ENCODE measurements at regions of chr9 and their contacts with region 1.

Region 1: GRCh38 chr9:75866273-75866871 is 24.1 kb upstream of the PCSK5 start:
- DNase-seq: no peak
- H3K4me3 ChIP-seq: no peak overlapping the region
- H3K27ac ChIP-seq: no peak overlapping the region
- H3K4me1 ChIP-seq: no peaks in the 10 kb centered on the region
- H3K27me3 ChIP-seq: no peaks in the 10 kb centered on the region
- CTCF ChIP-seq: peak in 3 of 4 experiments; percentile 58 to 72 (median 61)
- EP300 ChIP-seq: no peak
- POLR2A ChIP-seq: no peak

Region 2: DNA sequence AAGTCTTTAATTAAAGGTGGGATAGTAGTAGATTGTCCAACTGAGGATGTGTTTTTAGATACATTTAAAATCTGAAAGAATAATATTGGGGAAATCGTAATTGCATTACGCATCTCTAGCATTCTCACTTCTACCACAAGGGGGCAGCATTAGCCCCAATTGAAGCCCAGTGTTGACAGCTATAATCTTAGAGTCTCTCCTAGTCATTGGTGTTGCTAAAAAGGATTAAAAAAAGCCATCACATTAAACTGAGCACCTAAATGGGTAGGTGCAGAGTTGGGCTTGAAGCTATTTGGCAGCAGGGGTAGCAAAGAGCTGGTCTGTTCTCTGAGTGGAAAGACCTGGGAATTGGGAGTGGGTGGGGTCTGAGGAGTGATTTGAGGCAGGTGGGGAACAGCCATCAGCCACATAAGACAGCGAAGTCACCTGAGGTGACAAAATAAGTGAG is 600.8 kb before region 1 on chr9:
- intact Hi-C with region 1: loop called (anchors 10 kb)
- DNase-seq: no peak
- H3K4me3 ChIP-seq: no peak overlapping the region
- H3K27ac ChIP-seq: no peak overlapping the region
- H3K4me1 ChIP-seq: no peaks in the 10 kb centered on the region
- H3K27me3 ChIP-seq: no peaks in the 10 kb centered on the region
- CTCF ChIP-seq: peak in 3 of 4 experiments; percentile 57 to 74 (median 62)
- EP300 ChIP-seq: no peak
- POLR2A ChIP-seq: no peak

Region 3: GRCh38 chr9:75941066-75941465 is 74.7 kb after region 1 on chr9:
- intact Hi-C with region 1: no loop called
- DNase-seq: no peak
- H3K4me3 ChIP-seq: no peak overlapping the region
- H3K27ac ChIP-seq: no peak overlapping the region
- H3K4me1 ChIP-seq: peaks cover 0 to 13% (median 5%) of the 10 kb centered on the region in 4 donors
- H3K27me3 ChIP-seq: no peaks in the 10 kb centered on the region
- CTCF ChIP-seq: no peak
- EP300 ChIP-seq: no peak
- POLR2A ChIP-seq: no peak

Region 4: GRCh38 chr9:76302947-76303940 is 436.9 kb after region 1 on chr9:
- intact Hi-C with region 1: loop called (anchors 5 kb)
- DNase-seq: no peak
- H3K4me3 ChIP-seq: no peak overlapping the region
- H3K27ac ChIP-seq: no peak overlapping the region
- H3K4me1 ChIP-seq: peaks cover 0 to 5% (median 4%) of the 10 kb centered on the region in 4 donors
- H3K27me3 ChIP-seq: peaks cover 0 to 4% (median 0%) of the 10 kb centered on the region in 3 donors
- CTCF ChIP-seq: peak; percentile 15 to 69 (median 62)
- EP300 ChIP-seq: no peak
- POLR2A ChIP-seq: no peak